ENCODE measurements at regions of chr1 and their contacts with region 1.

Region 1: DNA sequence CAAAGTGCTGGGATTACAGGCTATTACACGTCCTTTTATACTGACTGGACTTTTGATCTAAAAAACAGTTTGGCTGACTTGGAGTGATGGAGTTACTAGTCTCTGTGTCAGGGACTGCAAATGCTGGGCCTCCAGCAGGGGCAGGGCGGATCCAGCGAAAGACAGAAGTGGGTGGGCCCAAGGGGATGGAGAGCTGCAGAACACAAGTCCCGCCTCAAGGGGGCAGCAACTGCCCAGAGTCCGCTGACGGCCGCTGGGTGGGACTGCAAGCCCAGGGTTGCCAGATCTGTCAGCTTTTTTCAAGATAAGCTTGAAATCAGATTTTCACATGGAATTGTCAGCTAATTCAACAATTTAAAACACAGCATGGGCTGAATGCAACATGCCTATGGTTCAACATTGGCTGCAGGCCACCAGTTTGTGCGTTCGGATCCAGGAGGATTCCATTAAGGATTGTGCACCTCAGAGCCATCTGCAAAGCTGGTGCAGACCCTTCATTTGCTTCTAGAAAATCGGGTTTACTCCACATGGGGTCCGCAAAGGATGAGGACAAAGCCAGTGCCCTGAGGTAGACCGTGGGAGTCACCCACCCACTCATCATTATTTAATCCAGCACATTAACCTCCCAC is 10.7 kb downstream of the STMN1 start:
- DNase-seq: no peak
- ATAC-seq: peak; percentile 97
- H3K4me3 ChIP-seq: no peak overlapping the region
- H3K27ac ChIP-seq: no peak overlapping the region
- H3K4me1 ChIP-seq: peaks cover 6% of the 10 kb centered on the region; the same call in 1 of the 2 replicates
- H3K27me3 ChIP-seq: no peaks in the 10 kb centered on the region
- CTCF ChIP-seq: peak; percentile 98 to 100 (median 99); a peak in 5 of 6 replicates
- EP300 ChIP-seq: no peak
- POLR2A ChIP-seq: peak; percentile 44
- RAD21 ChIP-seq: peak; percentile 89

Region 2: GRCh38 chr1:25805863-25806225 is 89.6 kb before region 1 on chr1:
- CTCF ChIA-PET with region 1: no interaction called
- POLR2A ChIA-PET with region 1: no interaction called
- RAD21 ChIA-PET with region 1: no interaction called
- SMC1A ChIA-PET with region 1: no interaction called
- in situ Hi-C with region 1: no loop called
- intact Hi-C with region 1: no loop called
- DNase-seq: no peak
- ATAC-seq: no peak
- H3K4me3 ChIP-seq: no peak overlapping the region
- H3K27ac ChIP-seq: no peak overlapping the region
- H3K4me1 ChIP-seq: peaks cover 40% of the 10 kb centered on the region
- H3K27me3 ChIP-seq: no peaks in the 10 kb centered on the region
- CTCF ChIP-seq: no peak
- EP300 ChIP-seq: no peak
- POLR2A ChIP-seq: no peak
- RAD21 ChIP-seq: no peak

Region 3: GRCh38 chr1:25819576-25820246 is 75.8 kb before region 1 on chr1 and contains the start of gene MTFR1L:
- CTCF ChIA-PET with region 1: interaction called, 11 read pairs
- POLR2A ChIA-PET with region 1: interaction called, 3 read pairs
- RAD21 ChIA-PET with region 1: interaction called, 6 read pairs
- SMC1A ChIA-PET with region 1: interaction called, 4 read pairs
- in situ Hi-C with region 1: no loop called
- intact Hi-C with region 1: no loop called
- DNase-seq: peak; percentile 66
- ATAC-seq: peak; percentile 95
- H3K4me3 ChIP-seq: peak within 1 kb of the TSS; percentile 83
- H3K27ac ChIP-seq: peak within 1 kb of the TSS; percentile 73
- H3K4me1 ChIP-seq: peaks cover 15% of the 10 kb centered on the region
- H3K27me3 ChIP-seq: no peaks in the 10 kb centered on the region
- CTCF ChIP-seq: no peak
- EP300 ChIP-seq: no peak
- POLR2A ChIP-seq: peak; percentile 89
- RAD21 ChIP-seq: no peak
- polyA plus RNA-seq, gene MTFR1L: 26.7 to 30.0 TPM

Region 4: GRCh38 chr1:25844536-25845337 is 50.7 kb before region 1 on chr1:
- CTCF ChIA-PET with region 1: interaction called, 15 read pairs
- POLR2A ChIA-PET with region 1: no interaction called
- RAD21 ChIA-PET with region 1: interaction called, 3 read pairs
- SMC1A ChIA-PET with region 1: interaction called, 4 read pairs
- in situ Hi-C with region 1: no loop called
- intact Hi-C with region 1: no loop called
- DNase-seq: no peak
- ATAC-seq: peak; percentile 95
- H3K4me3 ChIP-seq: no peak overlapping the region
- H3K27ac ChIP-seq: peak overlapping the region; percentile 29
- H3K4me1 ChIP-seq: peaks cover 8% of the 10 kb centered on the region; the same call in 1 of the 2 replicates
- H3K27me3 ChIP-seq: no peaks in the 10 kb centered on the region
- CTCF ChIP-seq: no peak
- EP300 ChIP-seq: no peak
- POLR2A ChIP-seq: no peak
- RAD21 ChIP-seq: no peak

Region 5: DNA sequence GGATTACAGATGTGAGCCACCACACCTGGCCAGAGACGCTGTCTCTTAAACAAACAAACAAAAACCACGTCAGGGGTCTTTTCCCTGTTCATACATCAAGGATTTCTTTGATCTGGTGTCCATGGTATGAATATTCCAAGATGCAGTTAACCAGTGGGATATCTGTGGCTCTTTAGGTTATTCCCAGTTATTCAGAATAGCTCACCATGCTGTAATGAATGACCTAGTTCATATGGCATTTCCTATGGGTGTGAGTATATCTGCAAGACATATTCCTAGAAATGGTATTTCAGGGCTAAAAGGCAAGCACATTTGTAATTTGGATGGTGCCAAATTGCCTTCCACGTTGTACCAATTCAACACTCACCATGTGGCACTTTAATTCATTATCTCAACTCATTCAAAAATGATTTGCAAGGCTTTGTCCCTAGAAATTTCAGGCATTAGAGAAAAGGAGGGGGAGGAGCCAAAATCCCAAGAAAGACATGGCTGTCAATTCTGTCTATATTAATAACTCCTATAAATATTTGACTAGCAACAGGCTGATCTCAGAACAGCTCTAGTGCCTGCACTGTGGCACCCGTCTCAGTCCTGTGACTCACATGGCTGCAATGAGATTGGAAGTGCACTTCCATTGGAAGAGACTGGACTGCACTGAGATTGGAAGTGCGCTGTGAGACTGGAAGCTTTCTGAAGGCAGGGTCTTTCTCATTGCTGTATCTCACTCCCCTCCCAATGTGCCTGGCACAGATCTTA is 16.8 kb after region 1 on chr1:
- CTCF ChIA-PET with region 1: interaction called, 21 read pairs
- POLR2A ChIA-PET with region 1: interaction called, 6 read pairs
- RAD21 ChIA-PET with region 1: interaction called, 12 read pairs
- SMC1A ChIA-PET with region 1: interaction called, 6 read pairs
- in situ Hi-C with region 1: no loop called
- intact Hi-C with region 1: no loop called
- DNase-seq: no peak
- ATAC-seq: no peak
- H3K4me3 ChIP-seq: no peak overlapping the region
- H3K27ac ChIP-seq: no peak overlapping the region
- H3K4me1 ChIP-seq: no peaks in the 10 kb centered on the region
- H3K27me3 ChIP-seq: no peaks in the 10 kb centered on the region; a peak in 2 of 4 replicates
- CTCF ChIP-seq: no peak
- EP300 ChIP-seq: no peak
- POLR2A ChIP-seq: no peak
- RAD21 ChIP-seq: no peak

Region 6: DNA sequence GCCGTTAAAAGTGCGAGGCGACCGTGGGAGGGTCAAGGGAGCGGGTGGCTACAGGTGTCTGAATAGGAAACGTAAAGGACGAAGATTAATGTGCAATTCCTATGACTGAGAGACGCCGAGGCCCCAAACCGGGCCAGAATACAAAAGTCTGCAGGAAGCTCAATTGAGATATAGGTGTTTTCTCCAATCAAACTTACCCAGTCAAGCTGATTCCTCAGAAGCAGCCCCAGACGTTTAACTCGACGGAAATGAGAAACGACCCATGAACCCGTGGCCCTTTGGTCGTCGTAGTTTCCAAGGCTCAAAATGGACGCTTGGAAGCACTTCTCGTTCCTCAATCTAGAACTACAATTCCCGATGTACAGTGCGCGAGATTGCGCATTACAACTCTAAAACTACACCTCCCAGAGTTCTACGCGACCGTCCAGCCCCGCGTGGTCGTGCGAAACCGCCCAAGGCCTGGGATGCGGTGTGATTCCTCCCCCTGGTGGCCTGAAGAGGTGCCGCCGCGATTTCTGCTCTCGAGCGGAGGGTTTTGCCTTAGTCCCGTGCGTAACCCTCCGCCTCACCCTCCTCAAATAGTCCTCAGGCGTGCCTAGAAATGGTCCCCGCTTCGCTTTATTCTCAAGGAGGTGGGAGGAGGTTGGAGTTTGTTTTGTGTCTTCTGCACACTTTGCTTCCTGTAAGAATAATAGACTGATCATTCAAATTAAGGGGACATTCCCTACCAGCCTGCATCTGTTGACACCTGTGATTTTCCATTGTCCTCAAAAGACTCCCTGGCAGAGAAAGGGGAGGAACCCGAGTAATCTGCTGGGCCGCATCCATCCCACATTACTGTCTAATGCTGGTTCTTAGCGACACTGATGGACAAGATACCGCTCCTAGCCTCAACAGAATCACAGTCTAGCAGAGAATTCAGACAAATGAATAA is 102.6 kb after region 1 on chr1 and contains the start of gene PAFAH2:
- CTCF ChIA-PET with region 1: interaction called, 383 read pairs
- POLR2A ChIA-PET with region 1: interaction called, 116 read pairs
- RAD21 ChIA-PET with region 1: interaction called, 296 read pairs
- SMC1A ChIA-PET with region 1: interaction called, 319 read pairs
- in situ Hi-C with region 1: loop called (anchors 5 kb)
- intact Hi-C with region 1: loop called (anchors 1 kb)
- DNase-seq: peak; percentile 99
- ATAC-seq: peak; percentile 99
- H3K4me3 ChIP-seq: peak within 1 kb of the TSS; percentile 69
- H3K27ac ChIP-seq: peak within 1 kb of the TSS; percentile 67
- H3K4me1 ChIP-seq: peaks cover 12% of the 10 kb centered on the region
- H3K27me3 ChIP-seq: no peaks in the 10 kb centered on the region
- CTCF ChIP-seq: peak; percentile 93 to 99 (median 99)
- EP300 ChIP-seq: peak in 1 of 2 experiments; percentile 53; a peak in 1 of 4 replicates
- POLR2A ChIP-seq: no peak
- RAD21 ChIP-seq: peak; percentile 96
- polyA plus RNA-seq, gene PAFAH2: 3.0 to 4.0 TPM

Region 7: DNA sequence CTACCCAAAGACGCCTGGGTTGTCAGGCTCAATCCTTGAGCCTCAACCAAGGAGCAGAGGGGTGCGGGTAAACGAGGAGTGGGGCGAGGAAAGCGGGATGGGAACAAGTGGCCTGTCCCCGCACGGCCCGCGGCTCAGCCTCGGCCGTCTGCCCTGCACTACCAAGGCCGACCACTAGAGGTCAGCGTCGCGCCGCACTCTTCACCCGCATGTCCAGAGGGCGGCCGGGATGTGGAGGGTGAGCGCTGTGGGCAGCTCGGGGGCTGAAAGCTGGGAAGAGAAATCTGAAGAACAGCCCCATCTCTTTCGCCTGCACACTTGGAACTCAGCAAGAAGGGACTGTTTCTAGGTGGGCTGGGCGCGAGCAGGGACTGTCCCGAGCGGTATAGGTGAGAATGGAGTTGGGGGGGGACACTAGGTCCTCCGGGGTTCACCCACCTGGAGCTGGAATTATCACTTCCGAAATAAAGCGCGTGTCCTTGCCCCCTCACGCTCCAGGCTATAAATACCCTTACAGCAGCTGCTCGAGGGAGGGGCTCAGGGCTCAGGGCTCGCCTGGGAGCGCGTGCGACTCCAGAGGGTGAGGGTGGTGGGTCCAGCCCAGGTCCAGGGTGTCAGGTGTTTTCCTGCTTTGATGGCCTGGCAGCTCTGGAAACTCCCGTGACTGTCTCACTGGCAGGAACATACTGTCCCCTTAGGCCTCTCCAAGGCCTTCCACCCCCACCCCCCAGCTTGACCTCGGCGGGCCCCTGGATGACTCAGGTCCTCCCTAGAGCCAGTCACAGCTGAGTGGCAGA is 140.7 kb after region 1 on chr1:
- CTCF ChIA-PET with region 1: interaction called, 14 read pairs
- POLR2A ChIA-PET with region 1: no interaction called
- RAD21 ChIA-PET with region 1: interaction called, 6 read pairs
- SMC1A ChIA-PET with region 1: interaction called, 5 read pairs
- in situ Hi-C with region 1: no loop called
- intact Hi-C with region 1: no loop called
- DNase-seq: peak; percentile 13
- ATAC-seq: peak; percentile 93
- H3K4me3 ChIP-seq: peak overlapping the region; percentile 86
- H3K27ac ChIP-seq: no peak overlapping the region
- H3K4me1 ChIP-seq: peaks cover 10% of the 10 kb centered on the region; the same call in 1 of the 2 replicates
- H3K27me3 ChIP-seq: peaks cover 0 to 2% of the 10 kb centered on the region in 2 experiments
- CTCF ChIP-seq: peak; percentile 97 to 100 (median 97); a peak in 5 of 6 replicates
- EP300 ChIP-seq: no peak
- POLR2A ChIP-seq: no peak
- RAD21 ChIP-seq: peak; percentile 82